CD14-positive monocyte (primary cell): ENCODE measurements at regions of chr7 and their contacts with region 1.

Region 1: DNA sequence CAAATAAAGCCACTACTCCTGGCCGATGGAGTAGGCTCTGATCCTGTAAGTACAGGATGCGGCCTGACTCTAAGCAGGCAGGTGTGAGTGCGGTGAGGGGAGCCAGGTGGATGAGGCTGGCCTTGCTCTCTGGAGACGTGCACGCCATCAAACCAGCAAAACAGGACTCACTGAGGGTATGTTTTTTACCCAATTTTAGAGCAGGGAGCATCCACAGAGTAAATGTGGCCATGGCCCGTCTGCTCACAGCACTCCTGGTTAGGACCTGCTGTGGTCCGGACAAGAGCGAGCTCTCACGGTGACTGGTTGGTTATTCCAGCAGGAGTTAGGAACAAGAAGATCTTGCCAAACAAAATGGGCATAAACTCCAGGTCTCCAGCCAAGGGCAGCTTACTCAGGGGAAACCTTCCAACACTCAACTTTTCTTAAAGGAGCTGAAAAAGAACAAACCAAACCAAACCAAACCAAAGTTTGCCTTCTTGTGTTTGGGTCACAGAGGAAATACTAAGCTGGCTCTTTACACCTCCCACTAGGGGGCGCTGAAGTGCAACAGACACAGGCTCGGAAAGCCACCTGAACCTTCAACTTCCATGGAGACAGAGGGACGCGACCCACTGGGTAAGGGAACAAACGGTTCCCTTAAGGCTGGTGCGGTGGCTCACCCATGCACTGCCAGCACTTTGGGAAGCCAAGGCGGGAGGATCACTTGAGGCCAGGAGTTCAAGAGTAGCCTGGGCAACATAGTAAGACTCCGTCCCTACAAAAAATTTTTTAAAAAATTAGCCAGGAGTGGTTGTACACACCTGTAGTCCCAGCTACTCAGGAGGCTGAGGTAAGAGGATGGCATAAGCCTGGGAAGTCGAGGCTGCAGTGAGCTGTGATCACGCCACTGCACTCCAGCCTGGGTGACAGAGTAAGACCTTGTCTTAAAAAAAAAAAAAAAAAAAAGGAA is 122.4 kb downstream of the CLEC2L start:
- DNase-seq: peak; percentile 73 to 88 (median 85)
- H3K4me3 ChIP-seq: no peak overlapping the region
- H3K4me3 Mint-ChIP-seq: peak overlapping the region in 1 of 2 donors; percentile 35
- H3K27ac ChIP-seq: peak overlapping the region in 1 of 2 donors; percentile 12
- H3K27ac Mint-ChIP-seq: peak overlapping the region in 3 of 7 donors; percentile 15 to 78 (median 23)
- H3K4me1 ChIP-seq: peaks cover 55 to 61% of the 10 kb centered on the region in 2 donors
- H3K4me1 Mint-ChIP-seq: peaks cover 64% of the 10 kb centered on the region
- H3K27me3 ChIP-seq: no peaks in the 10 kb centered on the region
- H3K27me3 Mint-ChIP-seq: peaks cover 0 to 3% (median 0%) of the 10 kb centered on the region in 3 donors
- CTCF ChIP-seq: peak; percentile 92

Region 2: DNA sequence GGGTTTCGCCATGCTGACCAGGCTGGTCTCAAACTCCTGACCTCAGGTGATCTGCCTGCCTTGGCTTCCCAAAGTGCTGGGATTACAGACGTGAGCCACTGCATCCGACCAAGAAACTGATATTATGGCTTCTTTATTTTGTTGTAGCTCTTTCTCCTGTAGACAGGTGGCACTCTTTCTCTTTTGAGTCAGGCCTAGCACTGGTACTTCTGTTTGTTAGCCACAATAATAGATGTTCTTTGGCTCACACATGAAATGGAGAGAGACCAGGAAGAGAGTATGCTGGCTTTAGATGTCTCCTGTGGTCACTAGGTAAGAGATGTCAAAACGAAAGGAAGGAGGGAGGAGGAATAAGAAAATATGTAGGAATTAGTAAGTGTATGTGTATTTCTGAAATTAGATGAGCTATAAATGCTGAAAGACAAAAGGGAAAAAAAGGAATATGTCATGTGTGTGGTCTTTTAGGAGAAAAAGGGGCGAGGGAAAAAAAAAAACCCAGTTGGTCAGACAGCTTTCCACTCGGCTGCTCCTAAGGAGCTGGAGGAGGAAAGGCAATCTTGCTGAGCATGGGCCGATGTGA is 43.6 kb before region 1 on chr7:
- intact Hi-C with region 1: no loop called
- DNase-seq: peak; percentile 7 to 20 (median 14)
- H3K4me3 ChIP-seq: no peak overlapping the region
- H3K4me3 Mint-ChIP-seq: no peak overlapping the region
- H3K27ac ChIP-seq: no peak overlapping the region
- H3K27ac Mint-ChIP-seq: no peak overlapping the region
- H3K4me1 ChIP-seq: no peaks in the 10 kb centered on the region
- H3K4me1 Mint-ChIP-seq: no peaks in the 10 kb centered on the region
- H3K27me3 ChIP-seq: no peaks in the 10 kb centered on the region
- H3K27me3 Mint-ChIP-seq: no peaks in the 10 kb centered on the region
- CTCF ChIP-seq: peak; percentile 68

Region 3: GRCh38 chr7:139680676-139681462 is 35.0 kb after region 1 on chr7:
- intact Hi-C with region 1: loop called (anchors 5 kb)
- DNase-seq: peak; percentile 94 to 99 (median 99)
- H3K4me3 ChIP-seq: no peak overlapping the region
- H3K4me3 Mint-ChIP-seq: peak overlapping the region in 1 of 2 donors; percentile 46
- H3K27ac ChIP-seq: peak overlapping the region; percentile 56 to 91
- H3K27ac Mint-ChIP-seq: peak overlapping the region; percentile 85 to 96 (median 94)
- H3K4me1 ChIP-seq: peaks cover 40 to 45% of the 10 kb centered on the region in 2 donors
- H3K4me1 Mint-ChIP-seq: peaks cover 50% of the 10 kb centered on the region
- H3K27me3 ChIP-seq: no peaks in the 10 kb centered on the region
- H3K27me3 Mint-ChIP-seq: peaks cover 0 to 5% (median 0%) of the 10 kb centered on the region in 3 donors
- CTCF ChIP-seq: no peak

Region 4: DNA sequence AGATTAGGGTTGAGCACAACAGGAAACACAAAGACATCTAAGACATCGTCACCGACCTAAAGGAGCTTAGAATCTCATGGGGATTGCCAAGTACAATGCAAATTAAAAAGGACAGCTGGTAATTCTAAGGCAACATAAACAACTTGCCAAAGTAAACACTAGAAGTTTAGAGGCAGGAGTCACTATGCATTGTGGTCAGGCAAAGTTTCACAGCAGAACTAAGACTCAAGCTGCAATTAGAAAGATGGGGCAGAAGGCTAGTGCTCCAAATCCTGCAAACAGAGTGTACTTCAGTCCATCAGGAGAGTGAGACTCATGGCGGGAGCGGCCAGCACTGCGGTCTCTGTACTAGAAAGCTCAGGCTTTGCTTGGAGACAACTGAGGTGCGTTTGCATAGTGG is 79.2 kb after region 1 on chr7:
- intact Hi-C with region 1: loop called (anchors 5 to 10 kb)
- DNase-seq: no peak
- H3K4me3 ChIP-seq: peak overlapping the region in 1 of 3 experiments; percentile 54
- H3K4me3 Mint-ChIP-seq: no peak overlapping the region
- H3K27ac ChIP-seq: peak overlapping the region; percentile 86 to 93
- H3K27ac Mint-ChIP-seq: peak overlapping the region; percentile 96 to 100 (median 99)
- H3K4me1 ChIP-seq: peaks cover 96 to 99% of the 10 kb centered on the region in 2 donors
- H3K4me1 Mint-ChIP-seq: peaks cover 66% of the 10 kb centered on the region
- H3K27me3 ChIP-seq: no peaks in the 10 kb centered on the region
- H3K27me3 Mint-ChIP-seq: peaks cover 0 to 4% (median 0%) of the 10 kb centered on the region in 3 donors
- CTCF ChIP-seq: no peak

Region 5: GRCh38 chr7:139771001-139771970 is 125.4 kb after region 1 on chr7:
- intact Hi-C with region 1: loop called (anchors 5 kb)
- DNase-seq: peak; percentile 89 to 95 (median 95)
- H3K4me3 ChIP-seq: peak overlapping the region in 1 of 3 experiments; percentile 35
- H3K4me3 Mint-ChIP-seq: peak overlapping the region; percentile 25 to 74
- H3K27ac ChIP-seq: peak overlapping the region; percentile 27 to 80
- H3K27ac Mint-ChIP-seq: peak overlapping the region; percentile 82 to 96 (median 94)
- H3K4me1 ChIP-seq: peaks cover 77 to 94% of the 10 kb centered on the region in 2 donors
- H3K4me1 Mint-ChIP-seq: peaks cover 86% of the 10 kb centered on the region
- H3K27me3 ChIP-seq: no peaks in the 10 kb centered on the region
- H3K27me3 Mint-ChIP-seq: peaks cover 0 to under 1% (median 0%) of the 10 kb centered on the region in 3 donors
- CTCF ChIP-seq: no peak

Region 6: DNA sequence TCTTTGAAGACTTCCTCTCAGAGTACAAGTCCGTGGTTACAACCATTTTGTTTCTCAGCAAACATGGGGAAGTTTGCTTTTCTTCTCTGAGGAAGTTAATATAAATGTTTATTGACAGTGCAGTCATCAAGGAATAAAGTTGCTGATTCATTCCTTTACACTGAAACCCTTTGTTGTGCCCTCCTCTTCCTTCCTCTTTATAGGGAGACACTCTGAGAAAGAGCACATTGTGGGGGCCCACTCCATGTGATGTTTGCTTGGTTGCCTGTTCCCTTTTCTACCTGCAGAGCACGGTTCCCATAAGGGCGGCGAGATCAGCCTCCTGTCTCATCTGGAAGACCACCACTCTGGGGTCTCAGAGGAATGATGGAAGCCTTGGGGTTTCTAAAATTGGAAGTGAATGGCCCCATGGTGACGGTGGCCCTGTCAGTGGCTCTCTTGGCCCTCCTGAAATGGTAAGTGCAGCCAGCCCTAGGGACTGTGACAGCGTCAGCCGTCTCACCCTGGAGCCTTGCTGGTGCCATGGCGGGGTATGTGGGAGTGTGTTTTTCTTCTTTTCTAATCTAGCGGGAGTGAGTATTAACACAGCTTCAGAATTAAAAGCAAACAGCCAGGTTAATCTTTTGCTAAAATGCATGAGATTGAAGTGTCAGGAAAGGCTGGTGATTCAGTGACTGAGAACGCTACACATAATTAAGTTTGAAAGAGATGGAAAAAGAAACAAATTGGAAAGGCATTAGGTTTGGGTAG is 183.4 kb after region 1 on chr7 and contains the start of gene TBXAS1:
- intact Hi-C with region 1: loop called in 1 of 2 experiments (anchors 2 kb)
- DNase-seq: peak; percentile 84 to 96 (median 91)
- H3K4me3 ChIP-seq: peak within 1 kb of the TSS; percentile 64 to 98 (median 86)
- H3K4me3 Mint-ChIP-seq: peak within 1 kb of the TSS; percentile 90 to 99
- H3K27ac ChIP-seq: peak within 1 kb of the TSS; percentile 90 to 94
- H3K27ac Mint-ChIP-seq: peak within 1 kb of the TSS; percentile 95 to 99 (median 97)
- H3K4me1 ChIP-seq: peaks cover 34 to 46% of the 10 kb centered on the region in 2 donors
- H3K4me1 Mint-ChIP-seq: peaks cover 45% of the 10 kb centered on the region
- H3K27me3 ChIP-seq: no peaks in the 10 kb centered on the region
- H3K27me3 Mint-ChIP-seq: peaks cover 0 to 6% (median 2%) of the 10 kb centered on the region in 3 donors
- CTCF ChIP-seq: no peak
- polyA plus RNA-seq, gene TBXAS1: 289 to 335 (median 298) TPM

Region 7: DNA sequence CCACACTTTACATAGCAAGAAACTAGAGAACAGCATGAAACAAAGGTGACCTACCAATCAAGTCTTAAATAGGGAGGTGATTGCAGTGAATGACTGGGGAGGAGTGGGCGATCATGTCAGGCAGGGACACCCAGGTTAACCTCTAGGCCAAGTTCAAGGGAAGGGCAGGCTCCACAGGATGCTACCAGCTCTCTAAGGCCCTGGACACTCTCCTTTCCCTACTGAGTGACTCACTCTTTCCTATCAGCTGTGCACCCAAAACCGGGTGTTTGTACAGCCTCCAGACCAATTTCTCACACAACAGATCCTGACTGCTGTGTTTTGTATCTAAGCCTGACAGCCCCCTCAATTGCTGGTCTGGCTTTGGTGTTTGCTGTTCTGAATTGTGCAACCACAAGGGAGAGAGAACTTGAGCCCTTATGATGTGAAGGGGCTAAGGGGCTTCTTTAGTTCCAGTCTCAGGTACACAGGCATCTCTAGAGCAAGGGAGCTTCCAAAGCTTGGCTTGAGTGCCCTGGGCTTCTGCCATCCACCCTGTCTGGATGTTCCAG is 291.0 kb after region 1 on chr7:
- intact Hi-C with region 1: loop called in 1 of 2 experiments (anchors 5 kb)
- DNase-seq: peak; percentile 16 to 43 (median 38)
- H3K4me3 ChIP-seq: peak overlapping the region in 1 of 3 experiments; percentile 10
- H3K4me3 Mint-ChIP-seq: no peak overlapping the region
- H3K27ac ChIP-seq: peak overlapping the region in 1 of 2 donors; percentile 11
- H3K27ac Mint-ChIP-seq: peak overlapping the region; percentile 13 to 86 (median 71)
- H3K4me1 ChIP-seq: peaks cover 24 to 25% of the 10 kb centered on the region in 2 donors
- H3K4me1 Mint-ChIP-seq: peaks cover 46% of the 10 kb centered on the region
- H3K27me3 ChIP-seq: no peaks in the 10 kb centered on the region
- H3K27me3 Mint-ChIP-seq: peaks cover 0 to 1% (median 0%) of the 10 kb centered on the region in 3 donors
- CTCF ChIP-seq: no peak

Region 8: DNA sequence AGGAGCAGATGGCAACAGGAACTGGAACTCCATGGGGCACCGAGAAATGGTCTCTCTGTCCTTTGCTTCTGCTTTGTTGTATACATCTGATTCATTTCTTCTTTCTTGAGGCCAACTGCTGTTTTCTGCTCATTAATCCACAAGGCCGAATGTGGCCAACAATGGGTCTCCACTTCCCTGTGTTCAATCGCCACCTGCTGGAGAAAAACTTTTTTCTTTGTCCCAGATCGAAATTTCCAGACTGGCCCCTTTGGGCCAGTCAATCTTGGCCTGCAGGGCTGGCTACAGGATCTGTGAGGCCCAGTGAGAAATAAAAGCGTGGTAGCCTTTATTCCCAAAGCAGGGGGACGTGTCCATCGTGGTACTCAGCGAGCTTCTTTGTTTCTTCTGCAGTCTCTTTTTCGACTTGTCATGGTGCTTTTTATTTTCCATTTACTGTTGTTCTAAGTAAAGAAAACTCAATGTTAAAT is 358.1 kb after region 1 on chr7:
- intact Hi-C with region 1: loop called (anchors 5 to 10 kb)
- DNase-seq: peak; percentile 21 to 41 (median 34)
- H3K4me3 ChIP-seq: no peak overlapping the region
- H3K4me3 Mint-ChIP-seq: no peak overlapping the region
- H3K27ac ChIP-seq: no peak overlapping the region
- H3K27ac Mint-ChIP-seq: peak overlapping the region in 3 of 7 donors; percentile 1 to 71 (median 32)
- H3K4me1 ChIP-seq: no peaks in the 10 kb centered on the region
- H3K4me1 Mint-ChIP-seq: peaks cover 4% of the 10 kb centered on the region
- H3K27me3 ChIP-seq: no peaks in the 10 kb centered on the region
- H3K27me3 Mint-ChIP-seq: peaks cover 0 to 3% (median 3%) of the 10 kb centered on the region in 3 donors
- CTCF ChIP-seq: peak; percentile 70